Posterior cingulate gyrus (tissue), 11 donors: ENCODE measurements at regions of chr5 and their contacts with region 1.

Region 1: GRCh38 chr5:152560512-152561137 is 155.5 kb upstream of the NMUR2 start:
- DNase-seq: peak; percentile 52 to 97 (median 79)

Region 2: DNA sequence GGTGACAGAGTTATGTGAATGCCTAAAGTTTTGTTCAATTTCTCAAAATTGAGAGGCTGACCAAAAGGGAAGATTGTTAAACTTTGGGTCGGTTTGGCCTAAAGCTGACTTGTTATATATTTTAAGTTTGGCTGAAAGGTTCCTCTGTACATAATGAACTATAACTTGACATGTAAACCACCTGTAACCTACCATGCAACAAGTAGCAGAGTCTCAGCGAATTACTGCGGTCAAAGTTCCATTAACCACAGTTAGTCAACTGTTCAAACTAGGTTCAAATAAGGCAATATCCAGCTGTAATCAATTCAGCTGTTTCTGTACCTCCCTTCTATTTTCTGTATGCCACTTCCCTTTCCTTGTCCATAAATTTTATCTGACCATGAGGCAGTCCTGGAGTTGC is 169.6 kb after region 1 on chr5:
- intact Hi-C with region 1: no loop called
- DNase-seq: no peak

Region 3: GRCh38 chr5:152900332-152900731 is 339.7 kb after region 1 on chr5:
- intact Hi-C with region 1: no loop called
- DNase-seq: no peak

Region 4: DNA sequence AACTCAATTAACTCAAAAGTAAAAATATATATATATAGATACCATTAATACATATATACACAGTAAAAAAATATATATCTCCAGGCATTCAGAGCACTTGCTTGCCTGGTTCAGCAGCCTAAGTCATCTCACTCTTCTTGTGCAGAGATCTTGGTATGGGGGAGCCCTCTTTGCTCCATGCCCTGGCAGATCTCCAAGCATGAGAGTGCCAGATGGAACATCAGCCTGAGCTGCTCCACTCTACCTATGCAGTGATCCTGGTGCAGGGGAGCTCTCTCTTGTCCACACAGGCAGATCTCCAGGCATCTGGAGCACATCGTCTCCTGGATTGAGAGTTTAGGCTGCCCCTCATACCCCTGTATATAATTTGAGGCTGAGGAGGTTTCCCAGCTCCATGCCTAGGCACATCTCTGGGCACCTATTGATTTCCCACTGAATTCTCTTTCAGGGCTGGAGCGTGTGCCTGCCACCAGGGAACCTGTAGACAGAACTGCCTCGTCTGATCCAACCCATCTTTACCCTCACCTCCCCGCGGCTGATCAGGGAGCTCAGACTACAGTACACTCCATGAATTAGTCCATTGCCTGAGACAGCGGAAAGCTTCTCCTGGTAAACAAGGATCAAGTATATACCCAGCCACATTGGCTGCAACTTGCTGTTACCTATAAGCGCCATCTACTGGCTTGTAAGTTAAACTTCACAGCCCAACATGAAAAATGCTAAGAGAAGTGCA is 587.4 kb after region 1 on chr5:
- intact Hi-C with region 1: loop called (anchors 10 kb)
- DNase-seq: no peak